Activated T-helper 2 cell treated with anti-CD3 and anti-CD28 coated beads, Interferon-gamma antibody, Interleukin-2, Interleukin-4, amounts not matched to agents 10 μg/mL and 5 μg/mL and 100 μg/mL, durations not matched to agents 14 hours and 24 hours and 36 hours (primary cell): ENCODE measurements at regions of chr20 and their contacts with region 1.

Region 1: GRCh38 chr20:51715163-51715860 is 52.9 kb downstream of the ATP9A start:
- DNase-seq: no peak
- H3K4me3 Mint-ChIP-seq: peak overlapping the region; percentile 30
- H3K27ac Mint-ChIP-seq: peak overlapping the region; percentile 90
- H3K4me1 Mint-ChIP-seq: peaks cover 33% of the 10 kb centered on the region
- H3K27me3 Mint-ChIP-seq: peaks cover 7% of the 10 kb centered on the region

Region 2: GRCh38 chr20:51480507-51481270 is 234.6 kb before region 1 on chr20:
- intact Hi-C with region 1: loop called (anchors 5 kb)
- DNase-seq: peak; percentile 35
- H3K4me3 Mint-ChIP-seq: peak overlapping the region; percentile 76
- H3K27ac Mint-ChIP-seq: peak overlapping the region; percentile 96
- H3K4me1 Mint-ChIP-seq: peaks cover 85% of the 10 kb centered on the region
- H3K27me3 Mint-ChIP-seq: no peaks in the 10 kb centered on the region

Region 3: DNA sequence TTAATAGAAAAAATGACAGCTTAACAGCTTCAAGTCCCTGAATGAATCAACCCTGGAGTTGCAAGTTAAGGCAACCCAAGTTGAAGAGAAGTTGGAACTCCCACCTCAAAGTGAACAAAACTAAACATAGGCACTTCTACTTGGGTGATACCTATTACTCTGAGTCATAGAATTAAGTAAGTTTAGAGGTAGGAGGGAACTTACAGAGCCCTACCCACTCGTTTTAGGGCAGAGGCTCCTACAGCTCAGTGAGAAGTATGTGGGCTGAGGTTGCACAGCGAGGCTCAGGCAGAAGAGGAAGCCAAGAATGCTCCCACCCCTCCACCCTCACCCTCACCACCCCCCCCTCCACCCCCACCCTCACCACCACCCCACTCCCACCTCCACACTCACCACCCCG is 215.0 kb before region 1 on chr20:
- intact Hi-C with region 1: no loop called
- DNase-seq: peak; percentile 46
- H3K4me3 Mint-ChIP-seq: no peak overlapping the region
- H3K27ac Mint-ChIP-seq: peak overlapping the region; percentile 79
- H3K4me1 Mint-ChIP-seq: peaks cover 74% of the 10 kb centered on the region
- H3K27me3 Mint-ChIP-seq: no peaks in the 10 kb centered on the region

Region 4: GRCh38 chr20:51631011-51631950 is 84.0 kb before region 1 on chr20:
- intact Hi-C with region 1: loop called (anchors 5 kb)
- DNase-seq: peak; percentile 35
- H3K4me3 Mint-ChIP-seq: peak overlapping the region; percentile 18
- H3K27ac Mint-ChIP-seq: peak overlapping the region; percentile 82
- H3K4me1 Mint-ChIP-seq: peaks cover 58% of the 10 kb centered on the region
- H3K27me3 Mint-ChIP-seq: peaks cover 13% of the 10 kb centered on the region

Region 5: DNA sequence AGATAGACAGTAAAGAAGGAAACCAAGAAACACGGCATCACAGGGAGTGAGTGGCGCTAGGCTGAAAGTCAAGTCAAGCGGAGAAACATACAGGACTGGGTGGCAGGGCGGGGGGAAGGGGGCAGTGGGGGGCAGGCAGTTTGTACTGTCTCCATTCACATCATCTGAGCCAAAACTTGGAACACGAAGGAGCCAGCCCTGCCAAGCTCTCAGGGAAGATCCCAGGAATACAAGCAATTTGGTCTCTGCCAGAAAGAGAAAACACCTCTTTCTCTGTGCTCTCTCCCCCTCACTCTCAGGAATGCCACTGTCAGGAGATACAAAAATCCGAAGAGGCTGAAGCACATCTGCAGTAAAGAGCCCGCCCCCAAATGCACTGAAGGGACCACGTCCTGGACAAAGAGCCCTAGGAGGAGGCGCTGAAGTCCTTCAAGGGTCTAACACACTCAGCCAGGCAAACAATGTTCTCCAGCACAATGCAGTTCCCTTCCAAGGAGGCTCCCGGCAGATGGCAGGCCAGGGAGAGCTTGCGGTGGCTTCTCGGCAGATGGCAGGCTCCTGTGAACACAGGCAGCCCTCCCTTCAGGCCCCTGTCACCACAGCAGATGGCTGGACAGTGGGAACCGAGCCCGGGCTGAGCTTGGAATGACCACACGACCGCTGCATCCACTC is 37.1 kb before region 1 on chr20:
- intact Hi-C with region 1: no loop called
- DNase-seq: no peak
- H3K4me3 Mint-ChIP-seq: no peak overlapping the region
- H3K27ac Mint-ChIP-seq: no peak overlapping the region
- H3K4me1 Mint-ChIP-seq: peaks cover 1% of the 10 kb centered on the region
- H3K27me3 Mint-ChIP-seq: no peaks in the 10 kb centered on the region

Region 6: DNA sequence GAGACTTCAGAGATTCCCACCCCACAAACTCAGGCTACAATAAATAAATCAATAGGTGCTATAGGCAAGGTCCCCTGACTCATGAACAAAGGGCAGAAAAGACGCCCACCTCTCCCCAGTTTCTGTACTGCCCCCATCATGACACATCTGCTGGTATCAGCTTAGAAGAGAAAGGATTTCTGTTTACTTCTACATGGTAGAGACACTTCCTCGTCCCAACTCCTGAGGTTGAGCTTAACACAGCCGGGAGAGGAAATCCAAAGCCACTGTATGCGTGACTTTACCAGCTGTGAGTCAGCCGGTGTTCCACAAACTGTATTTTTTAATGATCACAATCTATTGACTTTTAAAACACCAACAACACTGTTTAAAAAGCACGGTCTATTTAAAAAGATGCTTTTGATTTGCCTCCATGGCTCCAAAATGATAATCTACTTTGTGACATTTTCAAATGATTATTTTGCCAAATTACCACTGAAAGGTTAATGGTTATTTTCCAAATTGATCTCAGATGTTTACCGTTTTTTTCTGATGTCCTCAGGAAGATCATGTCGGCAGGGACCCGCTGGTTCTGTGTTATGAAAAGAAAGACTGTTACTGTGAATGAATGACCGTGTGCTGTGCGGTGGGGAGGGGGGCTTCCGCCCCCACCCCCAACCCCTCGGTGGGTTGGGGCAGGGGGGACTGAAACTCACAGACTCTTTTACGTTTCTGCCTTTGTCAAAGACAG is 19.6 kb before region 1 on chr20:
- intact Hi-C with region 1: loop called (anchors 1 kb)
- DNase-seq: no peak
- H3K4me3 Mint-ChIP-seq: peak overlapping the region; percentile 56
- H3K27ac Mint-ChIP-seq: peak overlapping the region; percentile 72
- H3K4me1 Mint-ChIP-seq: peaks cover 21% of the 10 kb centered on the region
- H3K27me3 Mint-ChIP-seq: peaks cover 8% of the 10 kb centered on the region

Region 7: GRCh38 chr20:51732096-51732791 is 16.9 kb after region 1 on chr20:
- intact Hi-C with region 1: loop called (anchors 2 kb)
- DNase-seq: no peak
- H3K4me3 Mint-ChIP-seq: peak overlapping the region; percentile 82
- H3K27ac Mint-ChIP-seq: peak overlapping the region; percentile 96
- H3K4me1 Mint-ChIP-seq: peaks cover 14% of the 10 kb centered on the region
- H3K27me3 Mint-ChIP-seq: peaks cover 2% of the 10 kb centered on the region

Region 8: DNA sequence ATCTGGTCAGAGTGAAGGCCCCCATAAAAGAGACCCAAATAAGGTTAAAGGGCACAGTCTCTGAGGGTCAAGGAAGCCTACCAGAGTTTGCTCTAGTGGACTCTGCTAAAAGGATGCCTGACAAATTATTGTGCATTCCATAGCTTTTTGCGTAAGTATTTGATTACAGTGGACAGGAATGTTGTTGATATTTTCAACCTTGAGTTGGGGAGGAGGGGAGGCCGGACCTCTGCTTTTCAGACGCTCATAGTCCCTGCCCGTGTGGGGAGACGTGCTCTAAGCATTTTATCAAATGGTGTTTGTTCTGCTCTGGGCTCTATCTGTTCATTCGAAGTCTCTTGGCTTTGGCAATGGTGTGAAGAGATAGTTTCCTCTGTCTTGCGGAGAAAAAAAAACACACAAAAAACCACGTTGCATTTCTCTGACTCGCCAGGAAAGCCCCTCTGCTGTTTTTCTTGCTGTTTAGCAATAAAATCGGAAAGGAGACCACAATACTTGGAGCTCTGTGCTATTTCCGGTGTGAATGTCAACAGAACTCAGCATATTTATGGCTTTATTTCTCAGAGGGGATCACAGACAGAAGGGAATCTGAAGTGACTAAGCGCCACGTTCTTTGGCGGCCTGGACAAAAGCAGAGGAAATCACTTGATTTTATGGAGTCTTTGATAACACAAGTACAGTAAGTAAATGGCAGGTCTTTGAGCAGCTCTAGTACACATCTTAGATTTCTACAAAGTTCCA is 316.4 kb after region 1 on chr20:
- intact Hi-C with region 1: loop called (anchors 5 kb)
- DNase-seq: no peak
- H3K4me3 Mint-ChIP-seq: no peak overlapping the region
- H3K27ac Mint-ChIP-seq: peak overlapping the region; percentile 64
- H3K4me1 Mint-ChIP-seq: peaks cover 12% of the 10 kb centered on the region
- H3K27me3 Mint-ChIP-seq: no peaks in the 10 kb centered on the region